CD14-positive monocyte (primary cell): ENCODE measurements at regions of chr12 and their contacts with region 1.

Region 1: DNA sequence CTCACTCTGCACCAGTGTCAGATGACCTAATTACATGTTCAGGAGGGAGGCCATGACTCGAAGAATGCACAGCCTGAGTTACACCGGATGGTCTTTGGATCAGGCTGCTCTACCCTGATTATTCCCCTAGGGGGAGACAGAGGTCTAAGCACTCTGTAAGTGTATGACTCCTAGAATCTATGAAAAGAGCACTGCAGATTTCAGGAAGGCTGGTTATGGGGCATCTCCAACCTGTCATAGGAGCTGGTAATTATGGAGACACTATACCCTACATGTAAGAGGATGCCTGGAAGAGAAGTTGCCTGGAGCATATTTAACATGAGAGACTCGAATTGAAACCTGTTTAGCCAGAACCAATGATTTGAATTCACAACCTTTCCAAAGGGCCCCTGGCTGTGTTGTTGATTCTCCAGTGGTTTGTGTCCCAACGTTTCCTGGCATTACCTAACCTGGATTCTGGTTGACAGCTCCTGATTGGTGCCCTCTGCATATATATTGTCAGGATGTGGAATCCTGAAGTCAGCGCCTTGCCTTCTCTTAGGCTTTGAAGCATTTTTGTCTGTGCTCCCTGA is at the start of gene MUCL1:
- DNase-seq: peak; percentile 58 to 79 (median 74)
- H3K4me3 ChIP-seq: no peak within 1 kb of the TSS
- H3K4me3 Mint-ChIP-seq: no peak within 1 kb of the TSS
- H3K27ac ChIP-seq: no peak within 1 kb of the TSS
- H3K27ac Mint-ChIP-seq: peak within 1 kb of the TSS in 1 of 7 donors; percentile 68
- H3K4me1 ChIP-seq: peaks cover 14% of the 10 kb centered on the region in 2 donors
- H3K4me1 Mint-ChIP-seq: peaks cover 29% of the 10 kb centered on the region
- H3K27me3 ChIP-seq: no peaks in the 10 kb centered on the region
- H3K27me3 Mint-ChIP-seq: no peaks in the 10 kb centered on the region
- CTCF ChIP-seq: peak; percentile 96
- polyA plus RNA-seq, gene MUCL1: not detected

Region 2: GRCh38 chr12:54759751-54760150 is 94.3 kb before region 1 on chr12:
- intact Hi-C with region 1: loop called in 1 of 2 experiments (anchors 10 kb)
- DNase-seq: peak; percentile 27 to 52 (median 37)
- H3K4me3 ChIP-seq: no peak overlapping the region
- H3K4me3 Mint-ChIP-seq: no peak overlapping the region
- H3K27ac ChIP-seq: no peak overlapping the region
- H3K27ac Mint-ChIP-seq: no peak overlapping the region
- H3K4me1 ChIP-seq: no peaks in the 10 kb centered on the region
- H3K4me1 Mint-ChIP-seq: no peaks in the 10 kb centered on the region
- H3K27me3 ChIP-seq: no peaks in the 10 kb centered on the region
- H3K27me3 Mint-ChIP-seq: peaks cover 0 to 4% (median 0%) of the 10 kb centered on the region in 3 donors
- CTCF ChIP-seq: peak; percentile 59

Region 3: DNA sequence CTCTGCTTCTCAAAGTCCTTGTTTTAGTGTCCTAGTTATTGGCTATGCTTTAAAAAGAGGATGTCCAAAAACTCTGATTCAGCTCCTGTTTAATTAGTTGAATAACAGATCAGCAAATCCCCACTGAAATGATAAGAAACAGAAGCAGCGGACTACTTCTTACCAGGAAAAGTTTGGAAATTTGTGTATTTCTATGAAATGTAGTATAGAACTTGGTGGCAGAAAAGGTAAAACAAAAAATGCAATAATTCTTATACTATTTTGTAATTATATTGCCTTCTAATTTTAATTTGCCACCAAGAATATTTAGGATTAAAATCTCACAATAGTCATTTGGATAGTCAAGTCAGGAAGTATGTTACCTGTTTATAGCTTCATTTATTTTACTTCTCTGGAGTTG is 718.1 kb after region 1 on chr12 and contains the start of gene OR2AP1:
- intact Hi-C with region 1: no loop called
- DNase-seq: no peak
- H3K4me3 ChIP-seq: no peak within 1 kb of the TSS
- H3K4me3 Mint-ChIP-seq: no peak within 1 kb of the TSS
- H3K27ac ChIP-seq: no peak within 1 kb of the TSS
- H3K27ac Mint-ChIP-seq: no peak within 1 kb of the TSS
- H3K4me1 ChIP-seq: no peaks in the 10 kb centered on the region
- H3K4me1 Mint-ChIP-seq: no peaks in the 10 kb centered on the region
- H3K27me3 ChIP-seq: no peaks in the 10 kb centered on the region
- H3K27me3 Mint-ChIP-seq: peaks cover 0 to 4% (median 2%) of the 10 kb centered on the region in 3 donors
- CTCF ChIP-seq: no peak
- polyA plus RNA-seq, gene OR2AP1: not detected